PC-3 (cell line): ENCODE measurements at regions of chr4 and their contacts with region 1.

Region 1: DNA sequence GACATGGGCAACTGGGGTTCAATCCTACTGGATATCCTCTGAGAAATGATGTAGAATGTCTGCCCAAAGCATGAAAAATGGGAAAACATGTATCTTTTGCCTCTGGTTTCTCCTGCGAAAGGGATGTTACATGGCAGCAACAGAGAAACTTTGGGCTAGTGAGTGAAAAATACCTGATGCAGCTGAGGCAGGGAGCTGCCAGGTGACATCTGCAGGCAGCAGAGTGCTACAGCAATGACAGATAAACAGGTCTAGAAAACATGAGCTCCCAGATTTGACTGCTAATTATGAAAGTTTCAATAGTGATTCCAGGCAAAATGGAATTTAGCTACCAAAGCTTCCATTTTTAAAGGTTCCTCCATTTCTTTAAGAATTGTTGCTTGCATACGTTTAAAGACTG is 4.8 kb upstream of the CXCL1 start:
- DNase-seq: peak; percentile 73
- ATAC-seq: peak; percentile 11; the same call in 1 of the 2 replicates
- H3K4me3 ChIP-seq: peak overlapping the region; percentile 6; the same call in 1 of the 2 replicates
- H3K27ac ChIP-seq: peak overlapping the region; percentile 82
- H3K4me1 ChIP-seq: peaks cover 70% of the 10 kb centered on the region
- H3K27me3 ChIP-seq: no peaks in the 10 kb centered on the region
- CTCF ChIP-seq: peak; percentile 93

Region 2: DNA sequence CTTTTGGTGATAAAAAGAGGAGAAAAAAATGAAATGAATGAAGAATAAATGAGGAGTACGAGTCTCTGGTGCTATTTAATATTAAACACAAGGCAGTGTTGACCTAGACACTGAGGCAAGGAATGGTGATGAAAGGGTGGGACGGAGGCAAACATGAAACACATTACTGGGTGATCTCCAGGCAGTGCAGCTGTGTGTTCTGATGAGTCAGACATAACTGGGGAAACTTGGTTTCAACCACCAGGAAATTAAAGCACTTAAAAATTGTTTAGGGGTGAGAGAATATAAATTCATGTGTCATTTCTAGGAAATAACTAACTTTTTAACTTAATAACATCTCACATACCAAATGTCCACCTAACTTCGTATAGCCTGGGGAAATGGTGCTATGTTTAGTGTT is 47.6 kb before region 1 on chr4:
- CTCF ChIA-PET with region 1: no interaction called
- POLR2A ChIA-PET with region 1: no interaction called
- intact Hi-C with region 1: loop called (anchors 2 kb)
- DNase-seq: peak; percentile 89
- ATAC-seq: peak; percentile 76
- H3K4me3 ChIP-seq: no peak overlapping the region
- H3K27ac ChIP-seq: peak overlapping the region; percentile 95
- H3K4me1 ChIP-seq: peaks cover 43% of the 10 kb centered on the region
- H3K27me3 ChIP-seq: no peaks in the 10 kb centered on the region
- CTCF ChIP-seq: no peak

Region 3: DNA sequence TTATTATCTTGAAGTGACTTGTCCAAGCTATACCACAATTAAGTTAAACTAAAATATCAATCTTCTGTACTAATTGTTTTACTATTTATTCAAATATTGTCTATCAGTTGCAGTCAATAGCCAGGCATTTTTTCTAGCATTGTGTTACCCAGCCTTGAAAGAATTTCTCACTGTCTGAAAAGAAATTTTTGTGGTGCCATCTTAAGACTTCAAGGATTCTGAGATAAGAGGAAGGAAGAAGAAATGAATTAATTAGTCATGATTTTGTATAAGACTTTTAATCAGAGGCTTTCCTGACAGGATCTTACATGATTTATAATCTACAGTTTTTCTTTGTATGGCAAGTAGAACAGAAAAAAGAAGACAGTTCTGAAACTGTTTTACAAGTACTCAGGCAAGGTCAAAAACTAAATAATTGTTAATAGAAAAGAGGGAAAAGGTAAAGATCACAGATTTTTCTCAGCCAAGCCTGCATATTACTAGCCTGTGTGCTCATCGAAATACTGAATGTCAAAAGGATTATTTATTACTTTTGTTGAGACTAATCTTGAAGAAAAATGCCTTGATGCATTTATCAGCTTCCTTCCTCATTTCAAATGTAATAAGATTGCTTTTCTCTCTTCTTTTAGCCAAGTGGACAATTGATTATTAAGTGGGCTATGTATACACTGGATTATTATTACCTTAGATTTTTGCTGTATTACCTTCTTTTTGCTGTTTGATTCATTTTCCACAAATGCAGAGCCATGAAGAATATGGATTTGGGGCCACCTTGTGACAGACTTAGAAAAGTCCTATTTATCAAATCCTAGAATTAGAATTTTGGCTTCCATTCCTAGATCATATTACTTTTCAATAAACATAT is 58.6 kb after region 1 on chr4:
- CTCF ChIA-PET with region 1: interaction called, 8 read pairs
- POLR2A ChIA-PET with region 1: no interaction called
- intact Hi-C with region 1: loop called (anchors 1 kb)
- DNase-seq: peak; percentile 83
- ATAC-seq: peak; percentile 70
- H3K4me3 ChIP-seq: no peak overlapping the region
- H3K27ac ChIP-seq: peak overlapping the region; percentile 59
- H3K4me1 ChIP-seq: peaks cover 26% of the 10 kb centered on the region
- H3K27me3 ChIP-seq: no peaks in the 10 kb centered on the region
- CTCF ChIP-seq: peak; percentile 91